Activated CD4-positive, alpha-beta memory T cell treated with anti-CD3 and anti-CD28 coated beads, Interleukin-2, amount 10 ng/mL, durations not matched to agents 7 days and 5 days (primary cell): ENCODE measurements at regions of chr5 and their contacts with region 1.

Region 1: GRCh38 chr5:112995764-112996618 is 19.4 kb downstream of the DCP2 start:
- DNase-seq: peak; percentile 80
- H3K4me3 Mint-ChIP-seq: no peak overlapping the region
- H3K27ac Mint-ChIP-seq: peak overlapping the region; percentile 12
- H3K4me1 Mint-ChIP-seq: peaks cover 14% of the 10 kb centered on the region
- H3K27me3 Mint-ChIP-seq: no peaks in the 10 kb centered on the region

Region 2: GRCh38 chr5:112958093-112959088 is 37.6 kb before region 1 on chr5:
- CTCF ChIA-PET with region 1: no interaction called
- POLR2A ChIA-PET with region 1: no interaction called
- DNase-seq: no peak
- H3K4me3 Mint-ChIP-seq: no peak overlapping the region
- H3K27ac Mint-ChIP-seq: no peak overlapping the region
- H3K4me1 Mint-ChIP-seq: peaks cover 37% of the 10 kb centered on the region
- H3K27me3 Mint-ChIP-seq: no peaks in the 10 kb centered on the region

Region 3: GRCh38 chr5:112983363-112983762 is 12.6 kb before region 1 on chr5:
- CTCF ChIA-PET with region 1: interaction called, 25 read pairs
- POLR2A ChIA-PET with region 1: interaction called, 3 read pairs
- DNase-seq: no peak
- H3K4me3 Mint-ChIP-seq: no peak overlapping the region
- H3K27ac Mint-ChIP-seq: no peak overlapping the region
- H3K4me1 Mint-ChIP-seq: peaks cover 66% of the 10 kb centered on the region
- H3K27me3 Mint-ChIP-seq: no peaks in the 10 kb centered on the region

Region 4: DNA sequence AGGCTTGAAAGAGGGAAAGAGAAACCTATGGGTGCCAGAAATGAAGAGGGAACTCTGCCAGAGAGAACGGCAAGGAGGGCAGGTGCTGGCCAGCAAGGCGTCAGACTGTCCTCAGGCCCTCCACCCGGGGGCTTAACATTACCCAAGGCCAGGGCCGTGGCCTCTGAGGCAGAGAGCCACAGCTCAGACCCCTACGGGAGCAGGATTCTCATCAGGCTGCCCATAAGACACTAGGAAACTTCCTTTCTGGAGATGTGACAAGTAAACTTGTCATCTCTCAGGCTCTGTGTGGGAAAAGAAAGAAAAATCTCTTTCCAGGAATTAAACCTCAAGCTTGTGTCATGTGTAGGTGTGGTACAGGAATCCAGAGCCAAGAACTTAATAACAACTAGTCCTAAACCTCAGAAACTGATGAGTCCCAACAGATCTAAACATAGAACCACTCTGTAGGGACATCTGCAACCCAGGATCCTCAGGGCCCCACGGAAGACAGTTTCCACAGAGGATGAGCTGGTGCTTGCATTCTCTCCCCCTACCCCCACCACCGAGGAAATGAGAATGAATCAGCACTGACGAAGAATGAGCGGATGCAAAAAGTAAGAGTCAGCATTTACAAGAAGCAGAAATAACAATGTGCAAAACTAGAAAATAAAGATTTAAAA is 54.9 kb after region 1 on chr5:
- CTCF ChIA-PET with region 1: interaction called, 15 read pairs
- POLR2A ChIA-PET with region 1: no interaction called
- DNase-seq: peak; percentile 69
- H3K4me3 Mint-ChIP-seq: peak overlapping the region; percentile 7
- H3K27ac Mint-ChIP-seq: peak overlapping the region; percentile 89
- H3K4me1 Mint-ChIP-seq: peaks cover 45% of the 10 kb centered on the region
- H3K27me3 Mint-ChIP-seq: no peaks in the 10 kb centered on the region

Region 5: GRCh38 chr5:113112435-113112834 is 116.4 kb after region 1 on chr5:
- CTCF ChIA-PET with region 1: no interaction called
- POLR2A ChIA-PET with region 1: no interaction called
- DNase-seq: no peak
- H3K4me3 Mint-ChIP-seq: no peak overlapping the region
- H3K27ac Mint-ChIP-seq: no peak overlapping the region
- H3K4me1 Mint-ChIP-seq: no peaks in the 10 kb centered on the region
- H3K27me3 Mint-ChIP-seq: no peaks in the 10 kb centered on the region

Region 6: DNA sequence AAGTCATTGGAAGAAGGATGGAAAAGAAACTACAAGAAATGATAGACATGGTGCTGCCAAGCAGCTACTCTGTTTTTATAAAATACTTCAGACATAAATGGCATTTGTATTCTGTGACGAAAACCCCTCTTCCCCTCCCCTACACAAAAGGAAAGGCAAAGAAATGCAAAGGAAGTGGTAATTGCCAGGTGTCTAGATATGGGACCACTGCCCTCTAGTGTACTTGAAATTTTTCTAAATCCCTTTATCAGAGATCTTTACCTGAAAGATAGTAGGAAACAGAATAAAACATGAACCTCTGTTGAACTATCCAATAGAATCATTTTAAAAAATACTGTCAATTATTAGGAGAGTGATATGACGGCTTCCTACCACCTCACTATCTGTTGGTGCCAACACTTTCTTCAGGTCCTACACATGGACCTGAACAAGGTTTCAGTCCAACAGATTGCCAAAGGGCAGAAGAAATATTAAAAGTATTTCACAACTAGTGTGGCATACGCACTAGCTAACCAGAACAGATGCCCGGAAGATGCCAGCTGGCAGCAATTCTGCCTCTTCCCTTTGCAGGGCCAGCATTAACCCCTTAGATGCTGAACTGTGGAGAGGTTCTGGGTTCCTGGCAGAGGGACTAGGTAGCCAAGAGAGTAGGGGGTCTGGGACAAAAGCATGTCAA is 334.7 kb after region 1 on chr5:
- CTCF ChIA-PET with region 1: interaction called, 104 read pairs
- POLR2A ChIA-PET with region 1: interaction called, 5 read pairs
- DNase-seq: no peak
- H3K4me3 Mint-ChIP-seq: no peak overlapping the region
- H3K27ac Mint-ChIP-seq: no peak overlapping the region
- H3K4me1 Mint-ChIP-seq: peaks cover 19% of the 10 kb centered on the region
- H3K27me3 Mint-ChIP-seq: peaks cover 2% of the 10 kb centered on the region

Region 7: GRCh38 chr5:113513384-113514288 is 517.6 kb after region 1 on chr5 and contains the start of gene YTHDC2:
- CTCF ChIA-PET with region 1: interaction called, 26 read pairs
- POLR2A ChIA-PET with region 1: interaction called, 3 read pairs
- DNase-seq: peak; percentile 90
- H3K4me3 Mint-ChIP-seq: peak within 1 kb of the TSS; percentile 86
- H3K27ac Mint-ChIP-seq: peak within 1 kb of the TSS; percentile 76
- H3K4me1 Mint-ChIP-seq: peaks cover 25% of the 10 kb centered on the region
- H3K27me3 Mint-ChIP-seq: peaks cover 12% of the 10 kb centered on the region
- total RNA-seq, gene YTHDC2: 30.3 to 31.0 TPM